Right ventricle myocardium inferior (tissue), 1 donor: ENCODE measurements at regions of chr3 and their contacts with region 1.

Region 1: DNA sequence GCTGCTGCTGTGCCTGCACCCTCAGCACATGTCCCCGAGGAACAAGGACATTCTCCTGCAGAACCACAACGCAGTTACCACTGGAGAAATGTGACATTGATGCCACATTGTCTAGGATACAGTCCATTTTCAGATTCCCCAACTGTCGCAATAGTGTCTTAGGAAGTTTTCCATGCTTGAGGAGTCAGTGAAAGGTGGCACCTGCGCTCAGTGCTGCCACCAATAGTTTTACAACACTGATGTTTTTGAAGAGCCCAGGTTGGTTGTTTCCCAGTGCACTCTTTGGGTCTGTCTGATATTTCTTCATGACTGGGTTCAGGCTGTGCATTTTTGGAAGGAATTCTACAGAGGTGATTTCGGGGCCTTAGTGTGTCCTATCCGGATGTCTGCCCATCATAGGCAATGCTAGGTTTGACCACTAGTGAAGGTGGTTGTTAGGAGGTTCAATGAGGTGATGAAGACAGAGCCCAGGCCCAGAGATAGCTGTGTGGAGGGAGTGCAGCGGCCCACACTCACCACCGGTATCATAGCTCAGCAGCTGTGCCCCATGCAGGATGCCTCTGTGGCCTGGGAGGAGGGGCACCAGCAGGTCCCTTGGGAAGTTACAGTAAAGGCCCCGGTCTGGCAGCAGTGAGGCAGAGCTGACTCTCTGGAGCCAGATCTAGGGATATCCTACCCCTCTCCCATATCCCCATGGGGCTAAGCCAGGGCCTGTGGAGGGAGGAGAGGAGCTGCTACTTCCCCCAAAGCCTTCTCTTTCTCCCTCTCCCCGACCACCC is 96.6 kb downstream of the DNAJB8 start:
- DNase-seq: peak; percentile 23
- ATAC-seq: peak; percentile 27

Region 2: DNA sequence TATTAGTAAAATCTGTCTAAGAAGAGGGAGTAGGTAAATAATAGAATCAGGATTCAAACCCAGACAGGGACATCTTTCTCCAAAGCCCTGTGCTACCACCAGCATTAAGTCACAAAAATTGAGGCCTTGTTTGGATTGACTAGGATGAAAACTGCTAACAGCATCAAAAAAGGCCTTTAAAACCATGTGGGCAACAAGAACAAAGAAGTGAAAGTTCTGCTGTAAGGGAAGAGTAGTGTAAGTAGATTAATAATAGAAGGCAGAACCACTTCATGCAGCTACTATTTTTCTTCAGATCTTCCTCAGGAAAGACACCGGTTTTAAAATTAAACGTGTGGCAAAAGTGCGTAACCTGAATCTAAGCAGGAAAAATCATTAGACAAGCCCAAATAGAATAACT is 470.3 kb before region 1 on chr3:
- intact Hi-C with region 1: no loop called
- DNase-seq: no peak
- ATAC-seq: no peak

Region 3: GRCh38 chr3:128236657-128237056 is 133.4 kb before region 1 on chr3:
- intact Hi-C with region 1: no loop called
- DNase-seq: no peak
- ATAC-seq: peak; percentile 40

Region 4: GRCh38 chr3:128297401-128298138 is 72.5 kb before region 1 on chr3:
- intact Hi-C with region 1: loop called (anchors 5 kb)
- DNase-seq: no peak
- ATAC-seq: peak; percentile 51

Region 5: DNA sequence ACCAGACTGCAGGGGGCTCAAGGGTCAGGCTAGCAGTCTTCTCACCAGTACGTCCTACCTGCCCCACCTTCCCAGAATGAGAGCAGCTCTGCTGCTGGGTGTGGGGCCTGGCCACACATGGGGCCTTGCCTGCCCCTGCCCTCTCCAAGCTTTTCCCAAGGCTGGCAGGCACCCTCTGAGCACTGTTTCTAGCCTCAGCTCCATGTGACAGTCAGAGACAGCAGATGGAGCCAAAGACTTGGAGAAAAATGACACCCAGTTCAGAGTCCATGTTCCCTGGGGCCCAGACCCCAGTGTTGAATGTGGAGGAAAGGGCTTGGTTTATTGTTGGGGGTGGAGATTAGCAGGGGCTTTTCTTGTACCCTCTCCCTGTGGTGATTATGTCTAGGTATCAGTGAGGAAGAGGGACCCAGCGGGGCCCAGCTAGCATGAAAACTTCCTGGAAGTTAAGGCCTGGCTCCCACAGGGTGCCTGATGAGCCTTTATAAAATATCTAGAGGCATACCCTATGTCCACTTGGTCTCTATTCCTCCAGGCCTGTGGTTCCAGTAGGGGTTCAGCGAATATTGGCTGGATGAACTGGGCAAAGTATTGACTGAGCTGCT is 62.9 kb before region 1 on chr3:
- intact Hi-C with region 1: loop called (anchors 1 kb)
- DNase-seq: no peak
- ATAC-seq: no peak

Region 6: DNA sequence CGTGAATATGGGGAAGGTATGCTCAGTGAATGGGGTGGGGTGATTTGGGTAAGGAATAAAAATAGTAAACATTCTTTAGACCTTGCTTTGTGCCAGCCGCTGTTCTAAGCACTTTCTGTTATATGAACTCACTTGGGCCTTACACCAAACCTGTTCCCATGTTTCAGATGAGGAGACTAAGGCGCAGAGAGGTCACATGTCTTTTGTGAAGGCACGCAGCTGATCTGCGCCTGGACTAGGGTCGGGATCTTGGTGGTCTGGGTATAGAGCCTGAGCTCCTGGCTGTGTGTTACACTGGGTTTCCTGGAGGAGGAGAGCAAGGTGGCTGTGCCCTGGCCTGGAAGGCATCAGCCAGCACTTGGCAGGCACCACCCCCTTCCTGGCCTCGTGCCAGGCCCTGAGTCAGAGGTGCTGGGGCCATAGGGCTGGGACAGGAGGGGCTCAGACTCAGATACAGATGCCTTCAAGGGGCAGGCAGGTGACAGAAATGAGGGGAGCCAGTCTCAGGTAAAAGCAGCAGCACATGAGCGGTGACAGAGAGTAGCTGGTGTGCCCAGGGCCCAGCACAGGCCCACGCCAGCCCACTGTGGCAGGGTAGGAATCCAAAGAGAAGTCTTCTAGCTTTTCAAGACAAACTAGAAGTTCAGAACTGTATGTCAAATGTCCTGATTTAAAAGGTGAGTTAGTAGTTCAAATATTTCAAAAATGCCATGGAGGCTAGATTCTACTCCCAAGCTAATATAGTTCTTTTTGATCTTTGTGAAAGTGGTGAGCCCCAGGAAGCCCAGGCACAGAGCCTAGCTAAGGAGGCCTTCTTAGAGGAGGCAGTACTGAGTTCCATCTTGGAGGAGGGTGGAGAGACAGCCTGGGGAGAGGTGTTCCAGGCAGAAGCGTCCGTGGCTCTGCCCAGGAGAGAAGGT is 13.5 kb after region 1 on chr3:
- intact Hi-C with region 1: loop called (anchors 2 kb)
- DNase-seq: peak; percentile 86
- ATAC-seq: peak; percentile 34

Region 7: GRCh38 chr3:128416578-128417211 is 46.6 kb after region 1 on chr3:
- intact Hi-C with region 1: no loop called
- DNase-seq: no peak
- ATAC-seq: no peak

Region 8: GRCh38 chr3:128438488-128439072 is 68.5 kb after region 1 on chr3:
- intact Hi-C with region 1: no loop called
- DNase-seq: peak; percentile 9
- ATAC-seq: peak; percentile 25